Dendritic cell treated with granulocyte-macrophage colony-stimulating factor and Interleukin-4, amounts not matched to agents 40 ng/mL and 50 ng/mL, for 4 days (primary cell): ENCODE measurements at regions of chr9 and their contacts with region 1.

Region 1: GRCh38 chr9:91144769-91145168 is 216.9 kb downstream of the AUH start:
- H3K4me3 Mint-ChIP-seq: no peak overlapping the region
- H3K27ac Mint-ChIP-seq: peak overlapping the region; percentile 93
- H3K4me1 Mint-ChIP-seq: peaks cover 78% of the 10 kb centered on the region
- H3K27me3 Mint-ChIP-seq: no peaks in the 10 kb centered on the region

Region 2: DNA sequence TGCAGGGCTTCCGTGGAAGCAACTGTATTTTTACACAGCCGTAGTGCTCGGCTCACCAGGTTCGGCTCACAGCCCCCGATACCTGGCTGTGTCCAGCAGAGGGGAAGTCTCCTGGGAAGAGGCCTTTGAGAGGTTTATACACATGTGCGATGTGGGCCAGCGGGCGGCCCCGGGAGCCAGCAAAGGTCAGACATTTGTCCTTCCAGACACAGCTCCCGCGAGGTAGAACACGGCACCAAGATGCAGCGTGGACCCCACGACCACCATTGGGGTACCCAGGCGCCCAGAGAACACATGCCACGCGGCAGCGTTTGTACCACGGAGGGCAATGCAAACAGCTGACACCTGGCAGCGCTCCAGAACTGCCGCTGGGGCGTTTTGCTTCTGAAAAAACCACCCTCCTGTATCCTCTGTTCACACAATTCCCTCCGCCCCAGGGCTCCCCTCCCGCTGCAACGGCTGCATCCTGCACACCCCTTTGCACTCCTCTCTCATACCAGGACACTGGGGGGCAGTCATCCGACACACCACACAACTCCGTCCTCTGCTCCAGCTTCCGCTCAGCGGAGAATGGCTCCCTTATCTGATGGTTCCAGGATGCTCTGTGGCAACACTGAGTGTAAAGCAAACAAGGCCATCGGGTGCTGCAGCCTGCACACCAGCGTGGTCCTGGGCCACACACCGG is 107.8 kb before region 1 on chr9:
- intact Hi-C with region 1: loop called (anchors 5 kb)
- H3K4me3 Mint-ChIP-seq: peak overlapping the region; percentile 46
- H3K27ac Mint-ChIP-seq: peak overlapping the region; percentile 52
- H3K4me1 Mint-ChIP-seq: peaks cover 53% of the 10 kb centered on the region
- H3K27me3 Mint-ChIP-seq: peaks cover 23% of the 10 kb centered on the region